CD4-positive, alpha-beta T cell (primary cell): ENCODE measurements at regions of chr3 and their contacts with region 1.

Region 1: GRCh38 chr3:16511681-16512434 is 1.6 kb downstream of the RFTN1 start:
- DNase-seq: peak; percentile 57 to 93 (median 68)
- ATAC-seq: peak; percentile 83
- H3K4me3 ChIP-seq: peak overlapping the region; percentile 92
- H3K4me3 Mint-ChIP-seq: peak overlapping the region; percentile 91
- H3K27ac ChIP-seq: peak overlapping the region; percentile 46 to 85
- H3K27ac Mint-ChIP-seq: peak overlapping the region; percentile 89
- H3K4me1 ChIP-seq: peaks cover 72% of the 10 kb centered on the region
- H3K4me1 Mint-ChIP-seq: peaks cover 84% of the 10 kb centered on the region
- H3K27me3 ChIP-seq: no peaks in the 10 kb centered on the region
- H3K27me3 Mint-ChIP-seq: no peaks in the 10 kb centered on the region
- CTCF ChIP-seq: no peak

Region 2: GRCh38 chr3:16290007-16290826 is 221.6 kb before region 1 on chr3:
- CTCF ChIA-PET with region 1: interaction called, 7 read pairs
- POLR2A ChIA-PET with region 1: interaction called, 12 read pairs
- intact Hi-C with region 1: loop called in 1 of 2 experiments (anchors 2 kb)
- DNase-seq: peak in 11 of 14 experiments; percentile 35 to 80 (median 58)
- ATAC-seq: peak; percentile 12
- H3K4me3 ChIP-seq: peak overlapping the region; percentile 91
- H3K4me3 Mint-ChIP-seq: peak overlapping the region; percentile 95
- H3K27ac ChIP-seq: peak overlapping the region; percentile 65 to 88
- H3K27ac Mint-ChIP-seq: peak overlapping the region; percentile 92
- H3K4me1 ChIP-seq: peaks cover 46% of the 10 kb centered on the region
- H3K4me1 Mint-ChIP-seq: peaks cover 73% of the 10 kb centered on the region
- H3K27me3 ChIP-seq: no peaks in the 10 kb centered on the region
- H3K27me3 Mint-ChIP-seq: no peaks in the 10 kb centered on the region
- CTCF ChIP-seq: peak; percentile 97

Region 3: GRCh38 chr3:16378920-16379319 is 132.9 kb before region 1 on chr3:
- CTCF ChIA-PET with region 1: no interaction called
- POLR2A ChIA-PET with region 1: interaction called, 10 read pairs
- intact Hi-C with region 1: loop called in 1 of 2 experiments (anchors 1 kb)
- DNase-seq: peak in 2 of 14 experiments; percentile 25 to 49
- ATAC-seq: peak; percentile 13
- H3K4me3 ChIP-seq: no peak overlapping the region
- H3K4me3 Mint-ChIP-seq: no peak overlapping the region
- H3K27ac ChIP-seq: peak overlapping the region in 1 of 2 donors; percentile 44
- H3K27ac Mint-ChIP-seq: peak overlapping the region; percentile 90
- H3K4me1 ChIP-seq: peaks cover 59% of the 10 kb centered on the region
- H3K4me1 Mint-ChIP-seq: peaks cover 97% of the 10 kb centered on the region
- H3K27me3 ChIP-seq: no peaks in the 10 kb centered on the region
- H3K27me3 Mint-ChIP-seq: no peaks in the 10 kb centered on the region
- CTCF ChIP-seq: no peak

Region 4: DNA sequence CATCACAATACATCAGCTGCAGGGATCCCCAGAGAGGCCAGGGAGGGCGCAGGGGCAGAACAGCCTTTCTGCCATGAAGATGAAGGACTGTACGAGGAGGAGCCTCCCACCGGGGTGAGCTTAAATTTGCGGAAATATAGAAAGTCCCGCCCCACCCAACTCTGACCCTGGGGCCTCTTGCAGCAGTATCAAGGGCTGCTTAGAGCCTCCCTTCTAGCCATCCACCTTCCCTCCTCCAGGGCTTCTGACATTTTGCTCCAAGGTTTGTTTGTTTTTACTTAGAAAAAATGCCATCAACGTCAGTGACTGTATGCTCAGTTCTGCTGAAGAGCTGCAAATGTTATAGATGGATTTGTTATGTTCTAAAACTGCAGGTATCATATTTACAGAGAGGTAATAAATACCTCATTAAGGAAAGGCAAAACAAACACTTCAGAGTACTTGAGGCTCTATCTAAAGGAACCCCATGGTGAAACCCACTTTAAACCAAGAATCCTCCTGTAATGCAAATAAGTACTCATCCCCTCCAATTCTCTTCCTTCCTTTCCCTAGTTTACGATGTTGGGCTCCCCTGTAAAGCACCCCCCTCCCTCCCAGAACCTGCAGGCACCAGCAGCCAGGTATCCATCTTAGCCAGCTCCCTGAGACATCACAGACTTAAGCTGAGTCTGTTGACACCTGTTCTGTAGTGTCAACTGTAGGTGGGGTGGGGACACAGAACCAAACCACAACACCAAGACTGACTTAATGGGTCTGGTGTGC is 28.9 kb before region 1 on chr3:
- CTCF ChIA-PET with region 1: interaction called, 4 read pairs
- POLR2A ChIA-PET with region 1: interaction called, 37 read pairs
- intact Hi-C with region 1: loop called (anchors 1 to 2 kb)
- DNase-seq: peak in 12 of 14 experiments; percentile 10 to 71 (median 40)
- ATAC-seq: peak; percentile 72
- H3K4me3 ChIP-seq: no peak overlapping the region
- H3K4me3 Mint-ChIP-seq: peak overlapping the region; percentile 81
- H3K27ac ChIP-seq: peak overlapping the region; percentile 56 to 71
- H3K27ac Mint-ChIP-seq: peak overlapping the region; percentile 91
- H3K4me1 ChIP-seq: peaks cover 44% of the 10 kb centered on the region
- H3K4me1 Mint-ChIP-seq: peaks cover 83% of the 10 kb centered on the region
- H3K27me3 ChIP-seq: no peaks in the 10 kb centered on the region
- H3K27me3 Mint-ChIP-seq: no peaks in the 10 kb centered on the region
- CTCF ChIP-seq: no peak

Region 5: DNA sequence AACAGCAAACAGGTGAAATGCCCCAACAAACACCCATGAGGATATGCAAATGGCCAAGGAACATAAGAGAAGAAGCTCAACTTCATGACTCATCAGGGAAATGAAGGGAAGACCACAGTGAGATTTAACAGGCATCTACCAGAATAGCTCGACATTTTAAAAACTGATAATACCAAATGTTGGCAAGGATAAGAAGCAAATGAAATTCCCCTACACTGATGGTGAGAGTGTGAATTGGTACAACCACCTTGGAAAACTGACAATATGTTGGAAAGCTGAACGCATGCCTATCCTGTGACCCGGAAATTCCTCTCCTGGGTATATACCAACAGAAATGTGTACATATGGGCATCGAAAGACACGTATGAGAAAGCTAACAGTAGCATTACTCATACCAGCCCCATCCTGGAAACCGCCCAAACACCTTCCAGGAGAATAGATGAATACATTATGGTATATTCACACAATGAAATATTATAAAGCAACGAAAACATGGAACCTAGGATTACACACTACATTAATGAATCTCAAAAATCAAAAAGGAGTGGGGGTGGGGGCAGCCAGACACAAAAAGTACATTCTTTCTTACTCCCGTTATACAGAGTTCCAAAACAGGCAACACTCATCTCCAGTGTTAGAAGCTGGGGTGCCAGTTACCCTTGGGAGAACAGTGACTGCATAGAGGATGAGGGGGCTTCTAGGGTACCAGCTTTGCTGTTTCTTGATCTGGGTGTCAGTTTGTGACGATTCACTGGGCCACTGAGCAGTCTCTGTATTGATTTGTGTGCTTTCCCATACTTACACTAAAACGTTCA is 15.2 kb before region 1 on chr3:
- CTCF ChIA-PET with region 1: interaction called, 4 read pairs
- POLR2A ChIA-PET with region 1: interaction called, 18 read pairs
- intact Hi-C with region 1: no loop called
- DNase-seq: peak in 1 of 14 experiments; percentile 17
- ATAC-seq: peak; percentile 57
- H3K4me3 ChIP-seq: no peak overlapping the region
- H3K4me3 Mint-ChIP-seq: peak overlapping the region; percentile 50
- H3K27ac ChIP-seq: peak overlapping the region in 1 of 2 donors; percentile 14
- H3K27ac Mint-ChIP-seq: peak overlapping the region; percentile 58
- H3K4me1 ChIP-seq: peaks cover 36% of the 10 kb centered on the region
- H3K4me1 Mint-ChIP-seq: peaks cover 63% of the 10 kb centered on the region
- H3K27me3 ChIP-seq: no peaks in the 10 kb centered on the region
- H3K27me3 Mint-ChIP-seq: no peaks in the 10 kb centered on the region
- CTCF ChIP-seq: no peak